Sigmoid colon (tissue), 7 donors: ENCODE measurements at regions of chr7 and their contacts with region 1.

Region 1: GRCh38 chr7:46558482-46559193 is 637.6 kb upstream of the IGFBP3 start:
- DNase-seq: no peak
- H3K4me3 ChIP-seq: no peak overlapping the region
- H3K27ac ChIP-seq: peak overlapping the region; percentile 23 to 79 (median 79)
- H3K4me1 ChIP-seq: peaks cover 0 to 39% (median 31%) of the 10 kb centered on the region in 4 donors
- H3K27me3 ChIP-seq: no peaks in the 10 kb centered on the region
- CTCF ChIP-seq: no peak
- EP300 ChIP-seq: no peak
- POLR2A ChIP-seq: no peak

Region 2: DNA sequence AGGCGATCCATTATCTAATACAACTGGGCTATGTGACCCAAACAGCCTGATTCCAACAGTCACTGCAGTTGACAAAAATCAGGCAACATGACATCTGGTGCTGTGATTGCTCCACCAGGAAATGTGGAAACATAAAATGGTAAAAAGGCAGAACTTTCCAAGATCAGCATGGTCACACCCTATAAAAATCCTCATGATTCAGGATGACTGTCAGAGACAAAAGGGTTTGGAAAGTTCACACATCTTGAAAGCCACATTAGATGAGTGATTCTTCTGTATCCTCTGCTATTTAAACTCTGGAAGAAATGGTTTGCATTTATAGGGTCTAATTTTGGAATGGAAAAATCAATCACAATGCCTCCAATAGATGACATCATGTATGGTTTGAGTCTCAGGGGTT is 25.0 kb after region 1 on chr7:
- intact Hi-C with region 1: no loop called
- DNase-seq: no peak
- H3K4me3 ChIP-seq: no peak overlapping the region
- H3K27ac ChIP-seq: no peak overlapping the region
- H3K4me1 ChIP-seq: no peaks in the 10 kb centered on the region
- H3K27me3 ChIP-seq: no peaks in the 10 kb centered on the region
- CTCF ChIP-seq: no peak
- EP300 ChIP-seq: no peak
- POLR2A ChIP-seq: no peak

Region 3: DNA sequence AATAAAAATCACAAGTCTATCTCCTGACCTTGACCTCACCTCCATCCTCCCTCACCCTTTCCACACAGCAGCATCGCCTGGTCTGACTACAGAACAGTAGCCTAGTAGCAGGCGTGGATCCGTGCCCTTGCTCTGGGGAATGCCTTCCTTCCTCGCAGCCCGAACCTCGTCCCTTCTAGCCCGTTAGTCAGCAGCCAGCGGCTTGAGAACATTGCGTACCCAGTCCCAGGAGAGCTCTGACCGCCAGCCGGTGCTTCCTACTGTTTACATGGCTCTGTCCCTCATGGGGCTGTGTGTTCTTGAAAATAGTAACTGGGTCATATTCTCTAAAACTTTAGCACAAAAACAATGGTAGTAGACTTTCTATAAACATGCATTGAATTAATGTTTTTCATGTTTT is 45.1 kb after region 1 on chr7:
- intact Hi-C with region 1: loop called (anchors 1 kb)
- DNase-seq: peak; percentile 99
- H3K4me3 ChIP-seq: no peak overlapping the region
- H3K27ac ChIP-seq: peak overlapping the region; percentile 80 to 87 (median 84)
- H3K4me1 ChIP-seq: peaks cover 0 to 33% (median 32%) of the 10 kb centered on the region in 4 donors
- H3K27me3 ChIP-seq: no peaks in the 10 kb centered on the region
- CTCF ChIP-seq: no peak
- EP300 ChIP-seq: peak; percentile 90 to 97 (median 94)
- POLR2A ChIP-seq: no peak